Testis (tissue), 5 donors: ENCODE measurements at regions of chr18 and their contacts with region 1.

Region 1: GRCh38 chr18:9971313-9971920 is 57.6 kb downstream of the VAPA start:
- DNase-seq: peak; percentile 94
- H3K4me3 ChIP-seq: no peak overlapping the region
- H3K27ac ChIP-seq: no peak overlapping the region
- H3K4me1 ChIP-seq: no peaks in the 10 kb centered on the region
- H3K27me3 ChIP-seq: no peaks in the 10 kb centered on the region
- CTCF ChIP-seq: peak; percentile 86 to 96 (median 92)
- POLR2A ChIP-seq: no peak

Region 2: DNA sequence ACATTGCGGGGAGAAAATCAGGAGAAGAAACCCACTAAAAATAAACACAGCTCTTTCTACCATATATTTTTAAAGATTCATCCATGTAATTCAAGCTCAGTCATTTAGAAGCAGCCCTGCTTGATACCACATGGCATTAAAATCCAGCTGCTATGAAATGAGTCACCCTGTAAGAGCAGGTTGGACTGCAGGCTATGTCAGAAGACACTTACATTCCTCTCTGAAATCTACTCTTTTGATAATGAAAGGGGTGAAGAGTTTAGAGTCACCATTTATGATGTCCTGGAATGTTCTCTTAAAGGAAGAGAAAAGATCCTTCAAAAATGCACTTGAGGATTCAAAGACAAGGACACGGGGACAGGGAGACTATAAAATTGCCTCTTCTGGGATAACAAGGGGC is 382.4 kb after region 1 on chr18:
- intact Hi-C with region 1: no loop called
- DNase-seq: no peak
- H3K4me3 ChIP-seq: no peak overlapping the region
- H3K27ac ChIP-seq: no peak overlapping the region
- H3K4me1 ChIP-seq: no peaks in the 10 kb centered on the region
- H3K27me3 ChIP-seq: no peaks in the 10 kb centered on the region
- CTCF ChIP-seq: no peak
- POLR2A ChIP-seq: no peak

Region 3: DNA sequence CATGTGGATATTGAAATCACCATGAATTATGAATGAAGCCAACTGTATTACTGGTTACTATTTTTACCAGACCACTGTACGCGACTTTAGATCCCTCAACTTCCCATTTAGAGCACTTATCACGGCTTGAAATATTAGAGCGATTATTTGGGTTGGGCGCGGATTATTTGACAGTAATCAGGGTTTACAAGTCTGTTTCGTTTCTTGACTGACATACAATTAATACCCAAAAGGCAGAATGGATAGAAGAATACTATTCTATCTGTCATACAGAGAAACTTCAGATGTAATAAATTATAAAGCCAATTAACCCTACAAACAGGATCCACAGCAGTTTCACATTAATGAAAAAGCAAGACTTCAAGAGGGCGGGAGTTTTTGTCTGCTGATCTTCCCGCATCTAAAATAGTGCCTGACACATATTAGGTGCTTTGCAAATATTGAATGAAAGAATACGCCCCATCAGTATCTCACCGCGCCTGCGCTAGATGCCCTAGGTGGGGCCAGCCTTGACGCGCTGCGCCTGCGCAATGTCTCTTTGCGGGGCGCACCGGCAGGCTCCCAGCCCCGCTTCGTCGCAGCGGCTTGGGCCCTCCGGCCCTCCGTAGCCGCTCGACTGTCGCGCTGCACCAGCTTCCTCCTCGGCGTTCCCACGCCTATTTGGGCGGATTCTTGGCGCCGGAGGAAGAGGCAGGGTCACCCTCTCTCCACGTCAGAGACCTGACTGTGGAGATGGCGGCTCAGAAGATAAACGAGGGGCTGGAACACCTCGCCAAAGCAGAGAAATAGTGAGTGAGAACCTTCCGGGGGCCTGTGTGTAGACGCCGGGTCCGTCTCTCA is 554.2 kb after region 1 on chr18 and contains the start of gene NAPG:
- intact Hi-C with region 1: loop called (anchors 10 kb)
- DNase-seq: peak; percentile 90
- H3K4me3 ChIP-seq: peak within 1 kb of the TSS; percentile 93 to 99
- H3K27ac ChIP-seq: peak within 1 kb of the TSS; percentile 83 to 95
- H3K4me1 ChIP-seq: peaks cover 4% of the 10 kb centered on the region
- H3K27me3 ChIP-seq: no peaks in the 10 kb centered on the region
- CTCF ChIP-seq: peak in 1 of 3 experiments; percentile 22
- POLR2A ChIP-seq: no peak
- total RNA-seq, gene NAPG: 33.5 to 40.3 TPM